Head of caudate nucleus (tissue), 42 donors: ENCODE measurements at regions of chr6 and their contacts with region 1.

Region 1: GRCh38 chr6:53906842-53907241 is 112.0 kb downstream of the LRRC1 start:
- DNase-seq: peak in 27 of 42 donors; percentile 6 to 70 (median 34)

Region 2: GRCh38 chr6:53825532-53826321 is 81.1 kb before region 1 on chr6:
- intact Hi-C with region 1: no loop called
- DNase-seq: no peak

Region 3: GRCh38 chr6:53846250-53846649 is 60.6 kb before region 1 on chr6:
- intact Hi-C with region 1: loop called (anchors 10 kb)
- DNase-seq: peak in 4 of 42 donors; percentile 30 to 69 (median 40)